ENCODE measurements at regions of chr16 and their contacts with region 1.

Region 1: GRCh38 chr16:88821168-88821850 is 9.6 kb upstream of the APRT start:
- DNase-seq: no peak
- H3K4me3 ChIP-seq: no peak overlapping the region
- H3K27ac ChIP-seq: no peak overlapping the region
- H3K4me1 ChIP-seq: no peaks in the 10 kb centered on the region
- H3K27me3 ChIP-seq: no peaks in the 10 kb centered on the region
- CTCF ChIP-seq: no peak
- POLR2A ChIP-seq: no peak

Region 2: GRCh38 chr16:88882358-88883030 is 61.2 kb after region 1 on chr16:
- intact Hi-C with region 1: no loop called
- DNase-seq: no peak
- H3K4me3 ChIP-seq: no peak overlapping the region
- H3K27ac ChIP-seq: no peak overlapping the region
- H3K4me1 ChIP-seq: peaks cover 21% of the 10 kb centered on the region
- H3K27me3 ChIP-seq: no peaks in the 10 kb centered on the region
- CTCF ChIP-seq: no peak
- POLR2A ChIP-seq: no peak

Region 3: DNA sequence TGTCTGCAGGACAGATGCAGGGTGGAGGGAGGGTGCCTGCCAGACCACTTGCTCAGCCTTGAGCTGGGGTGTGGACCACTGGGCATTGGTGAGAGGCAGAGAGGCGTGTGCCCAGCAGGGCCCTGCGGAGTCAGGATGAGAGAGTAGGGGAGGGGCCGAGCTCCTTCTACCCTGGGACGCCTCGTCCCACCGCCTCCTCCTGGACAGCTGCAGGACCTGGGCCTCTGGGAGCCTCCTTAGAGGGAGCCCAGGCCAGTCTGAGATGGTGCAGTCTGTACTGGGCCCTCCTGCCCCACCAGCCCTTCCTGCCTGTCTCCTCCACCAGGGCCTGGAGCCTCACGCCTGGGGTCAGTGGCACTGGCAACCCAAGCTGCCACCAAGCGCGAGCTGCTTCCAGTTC is 236.4 kb after region 1 on chr16:
- intact Hi-C with region 1: loop called (anchors 5 kb)
- DNase-seq: no peak
- H3K4me3 ChIP-seq: no peak overlapping the region
- H3K27ac ChIP-seq: no peak overlapping the region
- H3K4me1 ChIP-seq: no peaks in the 10 kb centered on the region
- H3K27me3 ChIP-seq: no peaks in the 10 kb centered on the region
- CTCF ChIP-seq: no peak
- POLR2A ChIP-seq: no peak

Measured in vagina (tissue), 2 donors.